A549 (cell line): ENCODE measurements at regions of chr3 and their contacts with region 1.

Region 1: DNA sequence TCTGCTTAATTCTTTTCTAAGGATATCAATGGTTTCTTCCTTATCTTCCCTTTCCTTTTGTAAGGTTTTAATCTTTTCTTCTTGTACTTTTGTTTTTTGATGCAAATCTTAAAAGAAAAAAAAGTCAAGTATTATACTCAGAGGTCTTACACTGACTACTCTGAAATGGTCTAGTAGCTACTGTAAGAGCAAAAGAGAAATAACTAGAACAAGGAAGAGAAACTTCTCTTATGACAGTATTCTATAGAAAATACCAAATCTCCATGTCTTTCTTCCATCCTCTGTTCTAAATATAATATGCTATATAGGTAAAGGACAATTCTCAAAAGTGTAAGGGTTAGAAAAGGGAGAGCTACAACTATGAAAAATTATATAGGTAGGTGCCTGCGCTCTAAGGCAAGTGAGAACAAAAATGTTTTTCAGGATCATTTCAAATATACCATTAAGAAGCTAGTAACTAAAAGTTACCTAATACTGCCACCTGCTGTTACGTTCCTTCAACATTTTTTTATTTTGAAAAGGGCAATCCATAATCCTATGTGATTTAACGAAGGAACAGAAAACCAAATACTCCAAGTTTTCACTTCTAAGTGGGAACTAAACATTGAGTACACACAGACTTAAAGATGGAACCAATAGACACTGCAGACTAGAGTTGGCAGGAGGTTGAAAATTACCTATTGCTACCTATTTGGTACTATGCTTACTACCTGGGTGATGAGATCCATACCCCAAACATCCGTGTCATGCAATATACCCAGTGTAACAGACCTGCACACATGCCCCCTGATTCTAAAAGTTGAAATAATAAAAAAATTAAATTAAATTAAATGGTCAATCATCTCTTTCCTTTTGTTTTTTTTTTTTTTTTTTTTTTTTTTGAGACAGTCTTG is 36.7 kb downstream of the CIP2A start:
- DNase-seq: peak; percentile 9 to 53
- ATAC-seq: peak; percentile 62 to 79; a peak in 4 of 6 replicates
- H3K4me3 ChIP-seq: no peak overlapping the region
- H3K27ac ChIP-seq: no peak overlapping the region
- H3K4me1 ChIP-seq: peaks cover 40% of the 10 kb centered on the region
- CTCF ChIP-seq: peak; percentile 75
- EP300 ChIP-seq: no peak
- POLR2A ChIP-seq: no peak
- RAD21 ChIP-seq: peak; percentile 55 to 69

Region 2: DNA sequence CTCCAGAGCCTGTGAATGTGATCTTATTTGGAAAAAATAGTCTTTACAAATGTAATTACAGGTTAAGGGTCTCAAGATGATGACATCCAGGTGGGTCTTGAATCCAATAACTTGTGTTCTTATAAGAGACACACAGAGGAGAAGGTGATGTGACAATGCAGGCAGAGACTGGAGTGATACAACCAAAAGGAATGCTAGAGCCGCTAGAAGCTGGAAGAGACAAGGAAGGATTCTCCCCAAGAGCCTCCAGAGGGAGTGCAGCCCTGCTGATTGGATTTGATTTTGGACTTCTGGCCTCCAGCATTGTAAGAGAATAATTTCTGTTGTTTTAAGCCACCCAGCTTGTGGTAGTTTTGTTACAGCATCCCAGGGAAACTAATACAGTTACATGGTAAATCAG is 51.8 kb before region 1 on chr3:
- CTCF ChIA-PET with region 1: interaction called, 15 read pairs
- POLR2A ChIA-PET with region 1: no interaction called
- DNase-seq: no peak
- ATAC-seq: 0 out of 6 replicates have a peak, but pooled peaks have one; percentile 35 to 54
- H3K4me3 ChIP-seq: no peak overlapping the region
- H3K27ac ChIP-seq: no peak overlapping the region
- H3K4me1 ChIP-seq: no peaks in the 10 kb centered on the region
- CTCF ChIP-seq: no peak
- EP300 ChIP-seq: no peak
- POLR2A ChIP-seq: no peak
- RAD21 ChIP-seq: no peak

Region 3: DNA sequence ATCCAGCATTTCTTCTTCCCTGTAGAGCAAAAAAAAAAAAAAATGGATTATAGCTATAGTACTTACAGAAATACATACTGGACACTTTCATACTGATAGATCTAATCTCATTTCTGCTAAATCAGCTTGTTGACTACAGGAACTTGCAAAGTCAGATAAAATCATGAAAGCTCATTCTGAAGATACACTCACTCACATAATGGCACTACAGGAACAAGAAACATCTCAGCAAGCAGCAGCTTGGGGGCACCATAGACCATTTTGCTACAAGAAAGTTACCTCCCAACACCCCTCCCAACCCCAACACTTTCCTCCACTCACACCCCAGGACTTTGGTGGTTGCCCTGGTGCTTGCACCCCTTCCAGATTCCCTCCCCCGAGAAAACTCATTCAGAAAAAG is 46.7 kb before region 1 on chr3:
- CTCF ChIA-PET with region 1: interaction called, 15 read pairs
- POLR2A ChIA-PET with region 1: no interaction called
- DNase-seq: no peak
- ATAC-seq: no peak
- H3K4me3 ChIP-seq: no peak overlapping the region
- H3K27ac ChIP-seq: no peak overlapping the region
- H3K4me1 ChIP-seq: no peaks in the 10 kb centered on the region
- CTCF ChIP-seq: no peak
- EP300 ChIP-seq: no peak
- POLR2A ChIP-seq: no peak
- RAD21 ChIP-seq: no peak

Region 4: DNA sequence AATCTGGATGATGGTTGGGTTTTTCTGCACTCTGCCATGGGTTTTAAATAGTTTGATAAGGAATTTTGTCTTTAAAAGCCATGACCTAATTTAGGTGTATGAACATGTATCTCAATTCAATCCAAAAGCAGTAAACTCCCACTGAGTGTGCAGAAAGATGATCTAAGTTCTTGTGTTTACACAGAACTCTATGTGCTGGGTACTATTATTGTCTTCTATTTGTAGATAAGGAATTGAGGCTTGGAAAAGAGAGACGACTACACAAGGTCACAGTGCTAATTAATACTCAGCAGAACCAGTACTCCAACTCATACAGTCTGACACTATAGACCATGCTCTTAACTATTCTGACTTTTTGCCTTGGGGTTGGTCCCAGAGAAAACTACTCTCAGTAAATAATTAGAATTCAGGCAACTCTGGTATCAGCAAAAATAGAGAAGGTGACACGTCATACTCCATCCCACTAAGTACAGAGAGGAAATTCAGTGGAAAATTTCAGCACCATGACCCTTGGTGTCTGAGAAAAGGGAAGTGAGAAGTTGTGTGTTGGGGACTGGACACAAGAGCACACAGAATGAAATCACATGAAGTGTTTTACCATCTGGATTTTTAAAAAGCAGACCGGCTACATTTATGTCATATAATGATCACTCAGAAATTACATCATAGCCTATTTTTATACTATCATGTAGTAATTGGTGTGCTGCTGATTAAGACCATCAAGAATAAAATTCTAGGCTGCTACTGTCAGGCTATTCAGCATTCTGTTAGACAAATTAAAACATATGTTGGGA is 23.9 kb before region 1 on chr3:
- CTCF ChIA-PET with region 1: interaction called, 11 read pairs
- POLR2A ChIA-PET with region 1: no interaction called
- DNase-seq: no peak
- ATAC-seq: no peak
- H3K4me3 ChIP-seq: no peak overlapping the region
- H3K27ac ChIP-seq: no peak overlapping the region
- H3K4me1 ChIP-seq: no peaks in the 10 kb centered on the region
- CTCF ChIP-seq: no peak
- EP300 ChIP-seq: no peak
- POLR2A ChIP-seq: no peak
- RAD21 ChIP-seq: no peak

Region 5: DNA sequence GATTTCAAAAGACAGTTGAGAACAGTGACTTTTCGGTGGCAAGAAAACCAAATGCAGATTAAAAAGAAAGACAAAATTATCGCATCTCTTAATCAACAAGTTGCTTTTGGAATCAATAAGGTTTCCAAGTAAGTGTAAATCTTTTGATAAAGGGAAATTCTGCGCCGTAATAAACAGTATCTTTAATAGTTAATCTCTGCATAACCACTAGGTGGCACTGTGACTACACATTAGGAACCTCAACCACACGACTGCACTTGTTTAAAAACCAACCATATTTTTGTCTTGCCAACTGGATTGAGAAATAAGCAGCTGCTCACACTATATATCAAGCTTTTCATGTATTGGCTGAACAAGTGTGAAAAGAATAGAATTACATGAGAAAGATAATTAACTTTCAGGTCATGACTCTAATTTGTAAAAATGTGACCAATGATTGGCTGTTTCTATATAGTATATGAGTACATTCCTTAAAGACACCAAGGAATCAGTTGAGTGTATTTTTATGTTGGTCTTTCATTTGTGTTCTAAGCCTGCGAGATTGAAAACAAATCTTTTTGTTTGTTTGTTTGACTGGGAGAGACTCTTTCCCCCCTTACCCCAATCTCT is 109.7 kb after region 1 on chr3:
- CTCF ChIA-PET with region 1: no interaction called
- POLR2A ChIA-PET with region 1: no interaction called
- DNase-seq: peak; percentile 42 to 69
- ATAC-seq: peak; percentile 73 to 85; a peak in 5 of 6 replicates
- H3K4me3 ChIP-seq: no peak overlapping the region
- H3K27ac ChIP-seq: no peak overlapping the region
- H3K4me1 ChIP-seq: no peaks in the 10 kb centered on the region
- CTCF ChIP-seq: peak; percentile 83
- EP300 ChIP-seq: no peak
- POLR2A ChIP-seq: no peak
- RAD21 ChIP-seq: peak; percentile 85